OCI-LY7 (cell line): ENCODE measurements at regions of chr22 and their contacts with region 1.

Region 1: GRCh38 chr22:28183078-28183860 is 264.2 kb upstream of the PITPNB start:
- DNase-seq: no peak
- H3K4me3 ChIP-seq: no peak overlapping the region
- H3K27ac ChIP-seq: no peak overlapping the region
- H3K4me1 ChIP-seq: no peaks in the 10 kb centered on the region
- CTCF ChIP-seq: no peak

Region 2: DNA sequence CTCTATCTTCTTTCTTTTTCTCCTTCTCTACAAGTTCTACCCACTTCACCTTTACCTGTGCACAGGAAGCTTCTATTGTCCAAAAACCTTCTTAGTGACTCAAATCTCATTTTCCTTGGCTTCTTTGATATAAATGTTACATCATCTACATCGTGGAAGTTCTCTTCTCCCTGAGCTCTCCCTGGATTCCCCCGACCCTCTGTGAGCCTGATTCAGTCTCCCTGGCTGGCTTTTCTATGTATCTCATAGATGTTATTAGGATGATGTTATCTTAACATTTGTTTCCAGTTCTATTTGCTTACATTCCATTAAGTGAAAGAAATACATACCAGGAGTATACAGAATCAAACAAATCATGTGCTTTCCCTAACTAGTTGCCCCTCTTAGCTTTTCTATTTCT is 28.4 kb before region 1 on chr22:
- CTCF ChIA-PET with region 1: no interaction called
- POLR2A ChIA-PET with region 1: no interaction called
- intact Hi-C with region 1: loop called (anchors 2 kb)
- DNase-seq: no peak
- H3K4me3 ChIP-seq: no peak overlapping the region
- H3K27ac ChIP-seq: no peak overlapping the region
- H3K4me1 ChIP-seq: no peaks in the 10 kb centered on the region
- CTCF ChIP-seq: no peak

Region 3: DNA sequence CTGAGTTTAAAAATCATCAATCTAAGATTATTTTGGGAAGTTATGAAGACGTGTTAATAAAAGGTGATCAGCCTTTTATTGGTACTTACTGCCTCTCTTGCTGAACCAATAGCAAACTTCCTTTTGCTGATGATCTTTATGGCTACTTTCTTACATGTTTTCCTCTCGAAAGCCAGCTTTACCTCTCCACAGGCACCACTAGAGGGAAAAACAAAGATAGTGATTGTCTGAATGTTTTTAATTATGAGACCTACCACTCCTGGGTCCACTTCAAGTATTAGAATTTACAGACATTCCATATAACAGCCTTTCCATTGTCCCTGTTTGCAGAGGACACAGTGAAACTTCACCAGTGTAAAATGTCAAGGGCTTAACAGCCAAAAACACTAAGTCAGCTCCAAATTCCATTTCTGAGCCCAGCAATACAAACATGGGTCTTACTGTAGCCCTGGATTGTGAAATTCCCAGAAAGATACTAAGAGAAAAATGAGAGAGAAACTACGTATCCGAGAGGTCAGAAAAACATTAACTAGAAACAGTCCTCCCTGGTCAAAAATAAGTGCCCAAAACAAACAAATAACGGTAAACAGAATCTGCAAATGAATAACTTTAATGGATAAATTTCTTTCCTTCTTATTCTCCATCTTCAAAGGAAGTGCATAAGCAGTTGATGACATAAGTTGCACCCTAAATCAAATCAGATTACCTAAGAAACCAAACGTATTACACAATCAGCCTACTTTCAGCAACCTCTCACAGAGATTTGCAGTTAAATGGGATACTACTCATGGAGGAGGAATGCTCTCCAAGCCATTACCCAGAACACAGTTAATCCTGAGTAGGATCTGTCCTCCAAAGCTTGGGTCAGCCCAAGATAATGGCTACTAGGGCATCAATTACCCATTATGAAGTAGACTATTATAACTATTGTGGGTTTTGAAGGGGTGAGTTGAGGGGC is 528.8 kb after region 1 on chr22:
- CTCF ChIA-PET with region 1: no interaction called
- POLR2A ChIA-PET with region 1: no interaction called
- intact Hi-C with region 1: no loop called
- DNase-seq: no peak
- H3K4me3 ChIP-seq: no peak overlapping the region
- H3K27ac ChIP-seq: no peak overlapping the region
- H3K4me1 ChIP-seq: peaks cover 5% of the 10 kb centered on the region
- CTCF ChIP-seq: no peak